Activated B cell treated with CpG ODN at 0.5 μM for 24 hours (primary cell): ENCODE measurements at regions of chr16 and their contacts with region 1.

Region 1: GRCh38 chr16:30378236-30379204 is 3.8 kb downstream of the SEPTIN1 start:
- DNase-seq: peak; percentile 99
- ATAC-seq: peak; percentile 88
- H3K4me3 Mint-ChIP-seq: peak overlapping the region; percentile 92
- H3K27ac Mint-ChIP-seq: peak overlapping the region; percentile 100
- H3K4me1 Mint-ChIP-seq: peaks cover 62% of the 10 kb centered on the region
- H3K27me3 Mint-ChIP-seq: no peaks in the 10 kb centered on the region
- CTCF ChIP-seq: no peak

Region 2: DNA sequence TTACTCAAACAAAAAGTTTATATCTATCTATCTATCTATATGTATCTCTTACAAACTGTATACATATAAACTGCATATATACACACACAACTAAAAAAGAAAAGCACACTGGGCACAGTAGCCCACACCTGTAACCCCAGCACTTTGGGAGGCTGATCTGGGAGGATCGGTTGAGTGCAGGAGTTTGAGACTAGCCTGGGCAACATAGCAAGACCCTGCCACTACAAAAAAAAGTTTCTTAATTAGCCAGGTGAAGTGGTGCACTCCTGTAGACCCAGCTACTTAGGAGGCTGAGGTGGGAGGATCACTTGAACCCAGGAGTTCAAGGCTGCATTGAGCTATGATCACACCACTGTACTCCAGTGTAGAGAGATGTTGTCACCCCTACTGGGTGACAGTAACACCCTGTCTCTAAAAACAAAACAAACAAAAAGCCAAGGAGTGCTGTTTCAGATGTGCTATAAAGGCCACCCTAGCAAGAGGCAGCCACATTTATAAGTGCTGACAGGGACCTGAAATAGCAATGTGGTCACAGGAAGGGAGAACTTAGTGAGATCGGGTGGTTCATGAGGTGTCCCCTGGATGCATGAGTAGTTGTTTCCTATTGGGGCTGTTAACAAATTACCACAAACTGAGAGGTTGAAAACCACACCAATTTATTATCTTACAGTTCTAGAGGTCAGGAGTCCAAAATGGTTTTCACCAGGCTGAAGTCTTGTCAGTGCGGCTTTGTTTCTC is 28.2 kb before region 1 on chr16:
- CTCF ChIA-PET with region 1: no interaction called
- POLR2A ChIA-PET with region 1: interaction called, 21 read pairs
- intact Hi-C with region 1: loop called (anchors 2 kb)
- DNase-seq: no peak
- ATAC-seq: peak; percentile 18
- H3K4me3 Mint-ChIP-seq: peak overlapping the region; percentile 67
- H3K27ac Mint-ChIP-seq: peak overlapping the region; percentile 79
- H3K4me1 Mint-ChIP-seq: peaks cover 52% of the 10 kb centered on the region
- H3K27me3 Mint-ChIP-seq: no peaks in the 10 kb centered on the region
- CTCF ChIP-seq: no peak

Region 3: DNA sequence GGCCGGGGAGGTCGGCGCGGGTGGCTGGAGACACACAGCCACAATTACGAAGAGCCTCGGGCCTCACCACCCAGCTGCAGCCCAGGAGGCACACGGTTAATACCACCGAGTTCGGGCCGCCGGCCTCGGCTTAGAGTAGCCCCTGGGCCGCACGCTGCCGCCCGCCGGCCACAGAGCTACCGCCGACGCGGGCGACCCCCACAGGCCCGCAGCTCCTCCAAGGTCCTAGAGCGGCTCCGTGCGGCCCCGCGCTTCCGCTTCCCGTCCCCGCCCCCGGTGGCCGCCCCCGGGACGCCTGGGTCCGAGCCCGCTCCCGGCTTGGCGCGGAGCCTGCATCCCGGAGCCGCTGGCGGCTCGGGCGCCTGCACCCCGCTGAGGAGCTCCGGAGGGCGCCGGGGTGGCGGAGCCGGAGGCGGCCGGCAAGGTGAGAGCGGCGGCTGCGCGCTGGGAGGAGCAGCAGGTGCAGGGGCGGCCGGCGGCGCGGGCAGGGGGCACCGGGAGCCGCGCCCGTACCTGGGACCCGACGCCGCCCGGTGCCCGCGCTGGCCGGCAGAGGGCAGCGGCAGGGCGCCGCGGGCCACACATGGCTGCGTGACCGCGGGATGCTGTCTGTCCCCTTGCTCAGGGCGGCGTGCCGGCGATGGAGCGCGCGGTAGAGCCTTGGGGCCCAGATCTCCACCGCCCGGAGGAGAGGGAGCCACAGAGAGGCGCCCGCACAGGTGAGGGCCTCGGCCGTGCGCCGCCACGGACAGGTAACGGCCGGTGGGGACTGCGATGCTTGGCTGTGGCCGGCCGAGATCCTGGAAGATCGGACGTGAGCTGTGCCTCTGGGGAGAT is 16.9 kb after region 1 on chr16 and contains the start of gene ZNF48:
- CTCF ChIA-PET with region 1: interaction called, 6 read pairs
- POLR2A ChIA-PET with region 1: interaction called, 56 read pairs
- intact Hi-C with region 1: loop called (anchors 1 kb)
- DNase-seq: peak; percentile 77
- ATAC-seq: peak; percentile 96
- H3K4me3 Mint-ChIP-seq: peak within 1 kb of the TSS; percentile 91
- H3K27ac Mint-ChIP-seq: peak within 1 kb of the TSS; percentile 78
- H3K4me1 Mint-ChIP-seq: peaks cover 31% of the 10 kb centered on the region
- H3K27me3 Mint-ChIP-seq: no peaks in the 10 kb centered on the region
- CTCF ChIP-seq: no peak
- total RNA-seq, gene ZNF48: 11.7 and 13.0 TPM in 2 replicates

Region 4: DNA sequence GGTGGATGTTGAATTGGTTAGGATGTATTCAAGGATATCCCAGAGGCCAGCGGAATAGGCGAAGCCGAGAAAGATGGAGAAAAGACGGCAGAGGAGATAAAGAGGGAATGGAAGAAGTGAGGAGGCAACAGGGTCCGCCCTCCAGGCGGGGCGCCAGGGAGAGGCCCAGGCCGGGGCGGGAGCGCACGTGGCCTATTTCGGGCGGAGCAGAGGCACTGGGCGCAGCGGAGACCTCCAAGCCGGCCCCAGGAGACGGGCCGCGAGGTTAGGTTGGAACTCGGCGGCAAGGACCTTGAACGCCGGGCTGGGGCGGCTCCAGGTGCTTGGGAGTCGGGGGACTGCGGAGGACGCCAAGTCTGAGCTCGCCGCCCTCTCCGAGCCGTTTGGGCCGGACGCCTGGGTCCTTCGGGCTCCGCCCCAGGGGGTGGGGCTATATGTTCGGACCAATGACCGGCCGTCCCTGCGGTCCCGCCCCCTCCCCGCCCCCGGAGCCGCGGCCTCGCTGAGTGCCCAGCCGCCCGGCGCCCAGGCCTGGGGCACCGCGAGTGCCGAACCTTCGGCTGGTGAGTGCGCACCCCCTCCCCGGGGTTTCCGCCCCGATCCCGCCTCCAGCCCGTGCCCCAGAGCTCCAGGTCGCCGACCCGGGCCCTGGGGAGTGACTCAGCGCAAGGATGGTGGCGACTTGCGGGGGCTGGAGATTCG is 28.7 kb after region 1 on chr16 and contains the start of gene ZNF771:
- CTCF ChIA-PET with region 1: interaction called, 11 read pairs
- POLR2A ChIA-PET with region 1: interaction called, 37 read pairs
- intact Hi-C with region 1: loop called (anchors 1 kb)
- DNase-seq: peak; percentile 90
- ATAC-seq: peak; percentile 89
- H3K4me3 Mint-ChIP-seq: peak within 1 kb of the TSS; percentile 89
- H3K27ac Mint-ChIP-seq: peak within 1 kb of the TSS; percentile 90
- H3K4me1 Mint-ChIP-seq: peaks cover 27% of the 10 kb centered on the region
- H3K27me3 Mint-ChIP-seq: no peaks in the 10 kb centered on the region
- CTCF ChIP-seq: no peak
- total RNA-seq, gene ZNF771: 4.4 and 5.2 TPM in 2 replicates

Region 5: DNA sequence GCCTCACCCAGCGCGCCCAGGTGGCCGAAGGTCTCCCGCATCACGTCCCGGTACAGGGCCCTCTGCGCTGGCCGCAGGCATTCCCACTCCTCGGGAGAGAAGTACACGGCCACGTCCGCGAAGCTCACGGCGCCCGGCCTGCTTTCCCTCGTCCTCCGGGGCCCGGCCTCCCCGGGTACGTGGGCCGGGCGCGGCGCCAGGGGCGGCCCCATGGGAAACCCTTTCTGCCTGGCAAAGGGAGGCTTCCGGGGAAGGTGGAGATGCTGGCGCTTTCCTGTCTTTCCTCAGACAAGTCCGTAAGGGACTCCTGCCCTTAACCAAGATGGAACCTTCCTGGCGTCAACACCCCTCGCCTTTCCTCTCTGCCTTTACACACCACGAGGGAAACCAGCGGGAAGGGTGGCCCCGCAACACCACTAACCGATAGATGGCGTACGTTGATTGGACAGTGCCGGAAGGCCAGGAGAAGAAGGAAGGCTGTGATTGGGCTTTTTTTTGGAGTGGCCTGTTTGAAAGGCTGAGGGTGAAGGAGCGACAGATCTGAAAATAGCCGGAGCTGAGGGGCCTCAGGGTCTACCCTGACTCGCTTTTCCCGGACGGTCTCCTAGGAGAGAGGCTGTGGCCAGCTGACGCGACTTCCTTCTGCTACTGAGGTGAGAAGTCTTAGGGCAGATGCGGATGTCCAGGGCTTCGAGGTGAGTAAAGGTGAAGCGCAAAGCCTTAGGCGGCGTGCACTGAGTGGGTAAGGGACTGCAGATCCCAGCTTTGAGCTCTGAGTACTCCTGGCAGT is 207.1 kb after region 1 on chr16 and contains the start of gene ZNF785:
- CTCF ChIA-PET with region 1: no interaction called
- POLR2A ChIA-PET with region 1: no interaction called
- intact Hi-C with region 1: no loop called
- DNase-seq: peak; percentile 76
- ATAC-seq: peak; percentile 99
- H3K4me3 Mint-ChIP-seq: peak within 1 kb of the TSS; percentile 85
- H3K27ac Mint-ChIP-seq: peak within 1 kb of the TSS; percentile 79
- H3K4me1 Mint-ChIP-seq: peaks cover 19% of the 10 kb centered on the region
- H3K27me3 Mint-ChIP-seq: no peaks in the 10 kb centered on the region
- CTCF ChIP-seq: no peak
- total RNA-seq, gene ZNF785: 20.0 and 22.8 TPM in 2 replicates